ENCODE measurements at regions of chr4 and their contacts with region 1.

Region 1: GRCh38 chr4:142567199-142567598 is 278.9 kb downstream of the INPP4B start:
- DNase-seq: peak; percentile 46
- H3K4me3 Mint-ChIP-seq: peak overlapping the region; percentile 75
- H3K27ac Mint-ChIP-seq: peak overlapping the region; percentile 100
- H3K4me1 Mint-ChIP-seq: peaks cover 47% of the 10 kb centered on the region
- H3K27me3 Mint-ChIP-seq: no peaks in the 10 kb centered on the region
- CTCF ChIP-seq: no peak

Region 2: DNA sequence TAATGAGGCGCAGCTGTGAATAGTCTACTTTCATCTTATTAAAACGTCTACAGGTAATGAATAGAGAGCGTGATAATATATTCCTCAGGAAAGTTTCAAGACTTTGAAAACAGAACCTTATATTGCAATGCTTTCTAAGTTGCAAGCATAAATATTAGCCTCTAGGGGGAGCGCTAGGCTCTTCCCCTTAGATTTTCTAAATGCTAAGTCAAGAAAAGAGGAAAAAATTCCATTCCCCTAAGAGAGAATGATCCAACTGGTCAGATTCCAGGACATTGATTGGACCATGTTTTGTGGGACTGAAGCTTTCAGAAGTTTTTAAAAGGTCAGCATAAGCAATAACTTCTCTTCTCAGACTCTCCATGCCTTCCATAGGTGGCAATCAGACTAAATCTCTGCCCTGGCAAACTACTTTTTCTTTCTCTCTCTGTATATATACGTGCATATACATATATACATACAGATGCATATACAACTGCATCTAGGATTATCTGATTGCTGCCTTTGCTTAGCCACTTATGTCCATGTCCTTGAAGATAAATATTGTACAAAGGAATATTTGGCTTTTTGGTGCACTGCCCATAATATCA is 214.0 kb before region 1 on chr4:
- CTCF ChIA-PET with region 1: no interaction called
- intact Hi-C with region 1: loop called (anchors 5 kb)
- DNase-seq: no peak
- H3K4me3 Mint-ChIP-seq: no peak overlapping the region
- H3K27ac Mint-ChIP-seq: peak overlapping the region; percentile 71
- H3K4me1 Mint-ChIP-seq: peaks cover 69% of the 10 kb centered on the region
- H3K27me3 Mint-ChIP-seq: no peaks in the 10 kb centered on the region
- CTCF ChIP-seq: peak; percentile 28

Region 3: DNA sequence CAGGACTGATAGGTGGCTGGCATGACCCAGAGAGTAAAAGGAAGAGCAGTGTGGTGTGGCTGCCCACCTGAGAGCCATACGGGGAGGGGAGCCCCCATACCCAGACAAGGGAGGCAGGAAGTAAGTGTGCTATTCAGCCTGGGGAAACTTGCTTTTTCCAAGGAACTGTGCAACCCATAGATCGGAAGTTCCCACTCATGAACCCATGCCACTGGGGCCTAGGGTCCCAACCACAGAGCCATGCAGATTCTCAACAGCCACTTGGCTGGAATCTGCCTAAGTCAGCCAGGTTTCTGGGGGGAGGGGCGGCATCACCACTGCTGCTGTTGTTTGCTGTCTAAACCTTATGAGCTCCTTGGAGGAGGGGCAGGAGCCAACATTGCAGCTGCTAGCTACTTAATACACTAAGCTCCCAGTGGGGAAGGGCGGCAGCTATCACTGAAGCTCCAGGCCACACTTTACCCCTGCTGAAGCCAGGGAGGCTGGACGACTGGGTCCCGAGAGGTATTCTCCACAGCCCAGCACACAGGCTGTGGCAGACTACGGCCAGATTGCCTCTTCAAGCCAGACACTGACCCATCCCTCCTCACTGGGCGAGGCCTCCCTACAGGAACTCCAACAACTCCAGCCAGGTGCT is 131.5 kb before region 1 on chr4:
- CTCF ChIA-PET with region 1: no interaction called
- intact Hi-C with region 1: no loop called
- DNase-seq: peak; percentile 32
- H3K4me3 Mint-ChIP-seq: no peak overlapping the region
- H3K27ac Mint-ChIP-seq: no peak overlapping the region
- H3K4me1 Mint-ChIP-seq: peaks cover 63% of the 10 kb centered on the region
- H3K27me3 Mint-ChIP-seq: no peaks in the 10 kb centered on the region
- CTCF ChIP-seq: no peak

Region 4: DNA sequence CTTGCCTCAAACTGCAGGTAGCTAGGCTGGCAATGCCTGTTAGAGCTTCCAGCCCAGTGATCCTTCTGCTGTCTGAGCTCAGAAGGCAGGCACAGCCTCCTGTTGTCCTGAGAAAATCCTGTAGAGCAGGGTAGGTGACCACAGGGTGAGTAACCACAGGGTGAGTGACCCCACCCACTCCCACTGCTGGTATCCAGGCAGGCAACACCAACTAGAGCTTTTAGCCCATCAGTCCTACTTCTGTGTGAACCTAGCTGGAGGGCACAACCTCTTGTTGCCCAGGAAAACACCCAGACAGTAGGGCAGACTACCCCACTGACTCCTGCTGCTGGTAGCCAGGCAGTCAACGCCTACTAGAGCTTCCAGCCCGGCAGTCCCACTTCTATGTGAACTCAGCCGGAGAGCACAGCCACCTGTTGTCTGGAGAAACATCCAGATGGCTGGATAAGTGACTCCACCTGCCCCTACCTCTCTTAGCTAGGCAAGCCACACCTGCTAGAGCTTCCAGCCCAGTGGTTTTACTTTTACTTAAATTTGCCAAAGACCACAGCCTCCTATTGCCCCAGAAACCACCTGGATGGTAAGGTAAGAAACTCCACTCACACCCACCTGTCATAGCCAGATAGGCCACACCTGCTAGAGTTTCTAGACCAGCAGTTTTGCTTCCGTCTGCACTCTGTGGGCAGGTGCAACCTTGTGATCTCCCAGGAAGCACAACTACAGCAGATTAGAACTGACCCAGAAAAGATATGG is 92.7 kb before region 1 on chr4:
- CTCF ChIA-PET with region 1: interaction called, 19 read pairs
- intact Hi-C with region 1: loop called (anchors 2 kb)
- DNase-seq: peak; percentile 85
- H3K4me3 Mint-ChIP-seq: peak overlapping the region; percentile 83
- H3K27ac Mint-ChIP-seq: peak overlapping the region; percentile 97
- H3K4me1 Mint-ChIP-seq: peaks cover 41% of the 10 kb centered on the region
- H3K27me3 Mint-ChIP-seq: no peaks in the 10 kb centered on the region
- CTCF ChIP-seq: no peak

Region 5: GRCh38 chr4:142600971-142601370 is 33.8 kb after region 1 on chr4:
- CTCF ChIA-PET with region 1: no interaction called
- intact Hi-C with region 1: loop called (anchors 5 kb)
- DNase-seq: no peak
- H3K4me3 Mint-ChIP-seq: peak overlapping the region; percentile 64
- H3K27ac Mint-ChIP-seq: peak overlapping the region; percentile 94
- H3K4me1 Mint-ChIP-seq: peaks cover 48% of the 10 kb centered on the region
- H3K27me3 Mint-ChIP-seq: no peaks in the 10 kb centered on the region
- CTCF ChIP-seq: no peak

Region 6: GRCh38 chr4:142840516-142841123 is 273.4 kb after region 1 on chr4:
- CTCF ChIA-PET with region 1: no interaction called
- intact Hi-C with region 1: loop called (anchors 5 kb)
- DNase-seq: no peak
- H3K4me3 Mint-ChIP-seq: no peak overlapping the region
- H3K27ac Mint-ChIP-seq: no peak overlapping the region
- H3K4me1 Mint-ChIP-seq: peaks cover 17% of the 10 kb centered on the region
- H3K27me3 Mint-ChIP-seq: no peaks in the 10 kb centered on the region
- CTCF ChIP-seq: peak; percentile 33

Measured in Calu3 (cell line).